HEK293T (cell line): ENCODE measurements at regions of chr7 and their contacts with region 1.

Region 1: GRCh38 chr7:35714862-35715261 is 19.9 kb upstream of the HERPUD2 start:
- DNase-seq: no peak

Region 2: GRCh38 chr7:35758421-35758820 is 43.6 kb after region 1 on chr7:
- CTCF ChIA-PET with region 1: no interaction called
- POLR2A ChIA-PET with region 1: no interaction called
- DNase-seq: peak; percentile 14

Region 3: DNA sequence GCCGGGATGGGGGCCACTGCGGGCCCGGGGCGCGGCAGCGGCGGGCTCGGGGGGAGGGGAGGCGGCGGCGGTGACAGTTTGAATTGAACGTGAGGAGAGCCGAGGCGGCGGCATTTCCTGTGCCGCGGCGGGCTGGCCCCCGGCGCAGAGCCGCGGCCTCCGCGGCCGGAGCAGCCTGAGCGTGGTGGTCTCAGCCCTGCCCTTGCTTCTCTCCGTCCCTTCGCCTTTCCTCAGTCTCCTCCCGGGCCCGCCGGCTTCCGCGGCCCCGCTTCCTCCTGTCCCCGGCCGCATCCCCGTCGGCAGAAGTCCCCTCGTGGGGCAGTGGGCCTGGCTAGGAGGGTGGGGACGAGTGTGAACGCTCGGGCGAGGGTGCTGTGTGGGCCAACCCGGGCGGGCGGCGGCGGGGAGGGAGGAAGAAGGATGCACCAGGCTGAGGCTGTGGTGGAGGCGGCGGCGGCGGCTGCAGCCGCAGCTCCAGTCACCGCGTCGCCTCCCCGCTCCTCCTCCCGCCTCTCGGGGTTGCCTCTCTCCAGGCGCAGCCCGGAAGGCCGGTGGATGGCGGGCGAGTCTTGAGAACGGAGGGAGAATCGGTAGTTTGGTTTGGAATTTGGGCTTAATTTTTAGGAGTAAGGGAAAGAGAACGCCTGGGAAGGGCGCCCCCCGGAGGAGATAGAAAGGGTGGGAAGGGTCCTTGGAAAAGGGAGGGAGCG is 86.7 kb after region 1 on chr7:
- CTCF ChIA-PET with region 1: interaction called, 8 read pairs
- POLR2A ChIA-PET with region 1: interaction called, 15 read pairs
- DNase-seq: peak; percentile 54

Region 4: GRCh38 chr7:35906191-35906908 is 191.5 kb after region 1 on chr7:
- CTCF ChIA-PET with region 1: interaction called, 11 read pairs
- POLR2A ChIA-PET with region 1: no interaction called
- DNase-seq: peak; percentile 50